Right cardiac atrium (tissue), 5 donors: ENCODE measurements at regions of chr12 and their contacts with region 1.

Region 1: GRCh38 chr12:57846577-57847319 is at the start of gene CTDSP2:
- DNase-seq: peak; percentile 100
- ATAC-seq: peak; percentile 91 to 92
- H3K4me3 ChIP-seq: peak within 1 kb of the TSS; percentile 92
- H3K27ac ChIP-seq: peak within 1 kb of the TSS; percentile 100
- H3K4me1 ChIP-seq: peaks cover 13% of the 10 kb centered on the region
- H3K27me3 ChIP-seq: no peaks in the 10 kb centered on the region
- total RNA-seq, gene CTDSP2: 94.3 to 116 (median 103) TPM

Region 2: GRCh38 chr12:57708296-57708695 is 138.5 kb before region 1 on chr12:
- intact Hi-C with region 1: no loop called
- DNase-seq: no peak
- ATAC-seq: no peak
- H3K4me3 ChIP-seq: no peak overlapping the region
- H3K27ac ChIP-seq: no peak overlapping the region
- H3K4me1 ChIP-seq: no peaks in the 10 kb centered on the region
- H3K27me3 ChIP-seq: no peaks in the 10 kb centered on the region

Region 3: DNA sequence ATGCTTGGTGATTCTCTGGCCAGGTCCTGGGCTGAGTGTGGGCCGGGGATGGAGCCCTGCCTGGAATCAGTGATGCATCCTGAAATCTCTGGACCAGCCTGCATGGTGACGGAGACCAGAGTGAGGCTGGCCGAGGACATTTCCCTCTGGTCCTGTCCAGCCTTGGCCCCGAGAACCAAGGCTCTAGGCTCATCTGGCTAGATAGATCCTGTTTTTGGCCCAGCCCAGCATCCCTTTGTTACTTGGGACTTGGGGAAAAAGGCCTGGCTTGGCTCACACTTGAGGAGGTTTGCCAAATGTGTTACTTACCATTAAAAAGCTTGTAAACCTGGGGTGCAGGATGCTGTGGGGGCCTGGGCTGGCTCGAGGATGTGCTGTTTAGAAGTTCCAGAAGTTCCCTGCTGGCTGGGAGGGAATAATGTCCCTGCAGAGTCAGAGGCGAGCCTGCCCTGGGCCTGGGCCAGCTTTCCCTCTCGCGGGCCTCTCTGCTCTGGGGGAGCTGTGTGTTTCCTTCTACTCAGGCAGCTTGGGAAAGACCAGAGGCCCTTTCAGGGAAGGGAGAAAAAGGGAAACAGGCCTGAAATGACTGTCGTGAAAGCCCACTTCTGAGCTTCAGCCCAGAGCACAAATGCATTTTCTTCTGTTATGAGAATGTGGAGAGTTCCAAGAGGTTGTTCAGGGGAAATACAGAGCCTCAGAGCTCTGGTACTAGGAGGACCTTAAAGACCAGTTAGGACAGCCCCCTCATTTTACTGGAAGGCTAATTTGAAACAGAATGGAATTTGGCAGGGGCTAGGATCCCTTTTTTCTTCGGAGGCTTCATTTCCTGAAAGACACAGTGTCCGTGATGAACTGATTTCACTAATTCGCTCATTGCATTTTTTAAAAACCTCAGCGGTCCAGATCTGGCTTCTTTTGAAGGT is 46.9 kb after region 1 on chr12:
- intact Hi-C with region 1: loop called in 2 of 4 experiments (anchors 5 kb)
- DNase-seq: peak; percentile 94 to 98 (median 97)
- ATAC-seq: peak; percentile 74 to 79
- H3K4me3 ChIP-seq: no peak overlapping the region
- H3K27ac ChIP-seq: peak overlapping the region; percentile 100
- H3K4me1 ChIP-seq: peaks cover 45% of the 10 kb centered on the region
- H3K27me3 ChIP-seq: no peaks in the 10 kb centered on the region

Region 4: GRCh38 chr12:57899010-57899662 is 52.4 kb after region 1 on chr12:
- intact Hi-C with region 1: loop called in 2 of 4 experiments (anchors 5 kb)
- DNase-seq: peak; percentile 51 to 69 (median 66)
- ATAC-seq: peak in 1 of 2 donors; percentile 21
- H3K4me3 ChIP-seq: no peak overlapping the region
- H3K27ac ChIP-seq: peak overlapping the region; percentile 71
- H3K4me1 ChIP-seq: peaks cover 26% of the 10 kb centered on the region
- H3K27me3 ChIP-seq: no peaks in the 10 kb centered on the region